Activated T-helper 1 cell treated with anti-CD3 and anti-CD28 coated beads, Interleukin-12 subunit alpha, Interleukin-12 subunit beta, Interleukin-2, Interleukin-4 antibody, amounts not matched to agents 30 ng/mL and 10 ng/mL and 1 ng/mL, durations not matched to agents 14 hours and 24 hours and 36 hours (primary cell): ENCODE measurements at regions of chr1 and their contacts with region 1.

Region 1: GRCh38 chr1:52702886-52703787 is 5.0 kb upstream of the COA7 start:
- DNase-seq: peak; percentile 80
- H3K4me3 Mint-ChIP-seq: peak overlapping the region; percentile 82
- H3K27ac Mint-ChIP-seq: peak overlapping the region; percentile 88
- H3K4me1 Mint-ChIP-seq: peaks cover 32% of the 10 kb centered on the region
- H3K27me3 Mint-ChIP-seq: peaks cover 4% of the 10 kb centered on the region

Region 2: DNA sequence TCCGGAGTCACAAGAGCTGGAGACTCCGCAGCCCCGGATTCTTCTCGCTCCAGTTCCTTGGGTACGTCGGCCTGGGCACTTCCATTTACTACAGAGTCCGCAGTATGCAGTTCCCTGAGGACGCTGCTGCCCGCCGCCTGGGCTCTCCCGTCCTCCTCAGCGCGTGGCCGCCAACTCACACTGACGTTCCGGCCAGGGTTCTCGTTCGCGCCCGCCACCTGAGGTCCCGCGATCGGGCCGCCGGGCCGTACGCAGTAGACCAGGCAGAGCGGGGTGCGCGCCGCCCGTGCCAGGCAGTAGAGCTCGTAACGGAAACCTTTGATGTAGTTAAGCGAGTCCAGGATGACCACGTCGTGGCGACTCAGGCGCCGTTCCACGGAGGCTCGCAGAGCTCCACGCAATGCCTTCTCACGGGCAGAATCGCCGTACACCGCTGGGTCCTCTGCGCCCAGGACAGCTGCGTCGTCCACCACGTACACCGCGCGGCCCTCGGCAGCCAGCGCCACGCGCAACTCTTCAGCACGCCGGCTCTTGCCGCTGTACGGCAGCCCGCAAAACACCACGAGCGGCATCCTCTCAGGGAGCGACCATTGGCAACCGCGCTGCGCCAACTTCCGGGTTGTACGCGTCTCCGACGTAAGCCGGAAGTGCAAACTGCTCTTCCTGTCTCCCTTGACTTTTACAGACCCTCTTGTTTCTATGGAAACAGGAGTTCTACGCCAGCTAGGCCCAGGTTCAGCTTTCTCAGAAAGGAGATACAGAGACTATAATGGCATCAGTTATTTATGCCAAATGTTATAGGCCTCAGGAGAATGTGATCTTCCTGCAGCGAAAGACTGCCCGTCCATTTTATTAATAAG is 669.7 kb before region 1 on chr1 and contains the start of gene KTI12:
- intact Hi-C with region 1: loop called (anchors 5 kb)
- DNase-seq: peak; percentile 84
- H3K4me3 Mint-ChIP-seq: peak within 1 kb of the TSS; percentile 93
- H3K27ac Mint-ChIP-seq: peak within 1 kb of the TSS; percentile 89
- H3K4me1 Mint-ChIP-seq: peaks cover 39% of the 10 kb centered on the region
- H3K27me3 Mint-ChIP-seq: no peaks in the 10 kb centered on the region
- total RNA-seq, gene KTI12: 21.6 and 22.4 TPM in 2 replicates

Region 3: GRCh38 chr1:52748119-52748518 is 45.0 kb after region 1 on chr1:
- intact Hi-C with region 1: loop called (anchors 1 kb)
- DNase-seq: no peak
- H3K4me3 Mint-ChIP-seq: no peak overlapping the region
- H3K27ac Mint-ChIP-seq: no peak overlapping the region
- H3K4me1 Mint-ChIP-seq: no peaks in the 10 kb centered on the region
- H3K27me3 Mint-ChIP-seq: peaks cover 2% of the 10 kb centered on the region

Region 4: DNA sequence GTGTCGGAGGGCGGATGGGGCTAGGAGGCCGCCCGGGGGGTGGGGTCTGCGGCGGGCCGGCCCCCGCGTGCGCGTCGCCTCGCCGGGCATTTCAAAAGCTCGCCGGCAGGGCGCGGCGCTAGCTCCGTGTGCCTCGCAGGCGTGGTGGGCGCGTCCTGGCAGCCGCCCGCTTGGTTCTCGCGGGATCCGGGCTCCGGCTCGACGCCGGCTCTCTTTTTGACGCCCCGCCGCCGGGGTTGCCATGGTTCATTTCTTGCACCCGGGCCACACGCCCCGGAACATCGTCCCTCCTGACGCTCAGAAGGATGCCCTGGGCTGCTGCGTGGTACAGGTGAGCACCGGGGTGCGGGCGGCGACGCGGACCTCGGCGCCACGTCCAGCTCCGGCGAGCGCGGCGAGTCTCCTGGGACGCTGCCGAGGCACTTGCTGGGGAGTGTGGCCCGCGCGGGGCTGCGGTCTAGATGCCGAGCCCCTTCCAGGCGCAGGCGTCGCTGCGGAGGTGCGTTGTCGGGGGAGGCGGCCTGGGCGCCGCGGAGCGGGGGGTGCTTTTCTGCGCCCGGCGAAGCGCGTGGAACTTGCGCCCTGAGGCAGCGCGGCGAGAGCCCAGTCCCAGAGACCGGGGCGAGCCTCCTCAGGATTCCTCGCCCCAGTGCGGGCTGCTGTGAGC is 139.6 kb after region 1 on chr1 and contains the start of gene ZYG11A:
- intact Hi-C with region 1: loop called (anchors 5 kb)
- DNase-seq: peak; percentile 75
- H3K4me3 Mint-ChIP-seq: peak within 1 kb of the TSS; percentile 77
- H3K27ac Mint-ChIP-seq: no peak within 1 kb of the TSS
- H3K4me1 Mint-ChIP-seq: peaks cover 8% of the 10 kb centered on the region
- H3K27me3 Mint-ChIP-seq: peaks cover 34% of the 10 kb centered on the region
- total RNA-seq, gene ZYG11A: 0.22 and 0.26 TPM in 2 replicates

Region 5: GRCh38 chr1:52920791-52921291 is 217.7 kb after region 1 on chr1:
- intact Hi-C with region 1: loop called (anchors 1 kb)
- DNase-seq: no peak
- H3K4me3 Mint-ChIP-seq: peak overlapping the region; percentile 86
- H3K27ac Mint-ChIP-seq: no peak overlapping the region
- H3K4me1 Mint-ChIP-seq: peaks cover 14% of the 10 kb centered on the region
- H3K27me3 Mint-ChIP-seq: peaks cover 2% of the 10 kb centered on the region

Region 6: GRCh38 chr1:53182111-53182593 is 479.0 kb after region 1 on chr1:
- intact Hi-C with region 1: loop called (anchors 1 kb)
- DNase-seq: peak; percentile 63
- H3K4me3 Mint-ChIP-seq: no peak overlapping the region
- H3K27ac Mint-ChIP-seq: no peak overlapping the region
- H3K4me1 Mint-ChIP-seq: no peaks in the 10 kb centered on the region
- H3K27me3 Mint-ChIP-seq: peaks cover 8% of the 10 kb centered on the region

Region 7: DNA sequence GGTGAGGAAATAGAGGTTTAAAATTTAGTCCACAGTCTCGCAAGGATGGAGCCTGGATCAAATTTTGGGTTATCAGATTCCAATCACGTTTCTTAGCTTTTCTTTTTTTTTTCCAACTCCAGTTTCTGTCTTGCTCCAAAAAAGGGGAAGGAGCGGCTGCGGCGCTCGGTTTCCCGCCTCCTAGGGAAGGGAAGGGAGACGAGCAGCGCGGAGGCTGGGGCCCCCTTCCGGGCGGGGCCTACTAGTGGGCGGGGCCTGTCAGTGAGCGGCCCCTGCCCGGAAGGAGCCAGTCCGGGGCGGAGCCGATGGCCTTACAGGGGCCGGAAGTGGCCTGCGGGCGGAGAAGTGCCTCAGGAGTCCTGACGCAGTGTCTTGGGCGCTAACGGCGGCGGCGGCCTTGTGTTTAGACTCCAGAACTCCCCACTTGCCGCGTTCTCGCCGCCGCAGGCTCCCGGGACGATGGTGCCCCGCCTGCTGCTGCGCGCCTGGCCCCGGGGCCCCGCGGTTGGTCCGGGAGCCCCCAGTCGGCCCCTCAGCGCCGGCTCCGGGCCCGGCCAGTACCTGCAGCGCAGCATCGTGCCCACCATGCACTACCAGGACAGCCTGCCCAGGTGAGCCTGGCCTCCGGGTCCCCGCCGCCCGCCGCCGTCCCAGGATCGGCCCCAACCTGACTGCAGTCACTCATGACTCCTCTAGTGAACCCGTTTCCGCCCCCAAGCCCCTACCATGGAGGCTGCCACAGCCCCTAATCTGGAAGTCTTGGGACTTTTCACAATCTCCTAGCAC is 493.5 kb after region 1 on chr1 and contains the start of gene CPT2:
- intact Hi-C with region 1: loop called (anchors 5 kb)
- DNase-seq: peak; percentile 92
- H3K4me3 Mint-ChIP-seq: peak within 1 kb of the TSS; percentile 95
- H3K27ac Mint-ChIP-seq: peak within 1 kb of the TSS; percentile 92
- H3K4me1 Mint-ChIP-seq: peaks cover 28% of the 10 kb centered on the region
- H3K27me3 Mint-ChIP-seq: no peaks in the 10 kb centered on the region
- total RNA-seq, gene CPT2: 18.5 and 19.4 TPM in 2 replicates